MCF 10A (cell line): ENCODE measurements at regions of chr20 and their contacts with region 1.

Region 1: DNA sequence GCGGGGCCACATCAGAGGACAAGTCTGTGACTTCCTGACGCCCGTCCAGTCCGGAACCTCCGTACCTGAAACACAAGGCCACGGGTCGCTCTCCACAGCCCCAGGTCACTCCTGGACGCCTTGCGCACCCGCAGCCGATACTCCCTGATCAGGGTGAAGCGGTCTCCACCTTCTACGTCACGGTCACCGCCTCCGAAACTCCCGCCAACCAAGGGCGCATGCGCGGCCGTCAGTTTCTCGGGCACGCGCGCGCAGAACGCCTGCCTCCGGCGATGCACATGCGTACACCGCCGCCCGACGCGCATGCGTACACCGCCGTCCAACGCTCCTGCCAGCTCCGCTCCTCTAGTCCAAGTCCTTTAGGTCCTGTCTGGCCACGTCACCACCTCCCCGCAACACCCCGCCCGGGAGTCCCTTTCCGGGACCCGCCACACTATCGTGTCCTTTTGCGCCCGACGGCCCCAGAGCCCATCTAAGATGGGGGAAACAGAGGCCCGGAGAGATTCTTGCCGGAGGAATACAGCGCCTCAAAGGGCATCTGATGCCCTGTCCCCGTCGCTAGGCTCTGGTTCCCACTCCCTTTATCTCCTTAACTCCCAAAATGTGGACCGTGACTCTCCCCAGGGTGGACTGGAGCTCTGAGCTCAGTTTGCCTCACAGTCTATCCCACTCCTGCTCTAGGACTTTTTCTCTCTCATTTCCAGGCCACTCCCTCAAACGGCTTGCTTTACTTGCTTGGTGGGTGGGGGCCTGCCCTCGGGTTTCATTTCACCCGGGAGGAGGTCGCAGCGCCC is at the start of gene DSN1:
- DNase-seq: peak; percentile 96
- H3K4me3 Mint-ChIP-seq: peak within 1 kb of the TSS; percentile 79
- H3K27ac Mint-ChIP-seq: peak within 1 kb of the TSS; percentile 90
- H3K4me1 Mint-ChIP-seq: peaks cover 8% of the 10 kb centered on the region
- H3K27me3 Mint-ChIP-seq: no peaks in the 10 kb centered on the region
- CTCF ChIP-seq: no peak
- total RNA-seq, gene DSN1: 7.8 and 8.4 TPM in 2 replicates

Region 2: DNA sequence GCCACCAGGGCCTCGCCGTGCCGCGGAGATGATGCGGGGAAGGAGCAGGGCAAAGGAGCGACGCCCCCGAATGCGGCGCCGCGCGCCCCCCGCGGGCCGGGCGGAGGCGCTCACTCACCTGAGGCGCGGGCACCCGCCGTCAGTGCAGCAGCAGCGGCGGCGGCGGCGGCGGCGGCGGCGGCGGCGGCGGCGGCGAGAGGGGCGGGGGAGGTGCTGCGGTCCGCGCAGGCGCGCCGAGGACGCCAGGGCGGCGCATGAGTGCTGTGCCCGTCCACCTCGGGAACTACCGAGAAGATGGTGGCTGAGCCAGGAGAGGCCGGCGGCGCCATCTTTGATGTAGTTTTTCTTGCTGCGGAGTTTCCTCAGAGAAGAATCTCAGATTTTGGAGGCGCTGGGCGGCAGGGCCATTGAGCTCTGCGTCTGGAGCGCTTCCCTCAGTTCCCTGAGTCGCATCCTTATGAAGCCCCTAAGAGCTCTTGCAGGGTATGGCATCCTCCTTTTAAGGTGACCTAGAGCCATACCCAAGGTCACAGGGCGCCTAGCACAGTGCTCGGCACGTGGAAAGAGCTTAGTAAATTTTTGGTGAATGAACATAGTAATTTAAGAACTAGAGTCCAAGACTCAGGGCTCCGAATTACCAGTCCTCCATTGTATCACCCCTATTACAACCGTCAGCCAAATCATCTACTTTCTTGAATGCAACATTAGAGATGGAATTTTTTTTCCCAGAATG is 27.7 kb before region 1 on chr20 and contains the start of gene NDRG3:
- CTCF ChIA-PET with region 1: interaction called, 5 read pairs
- POLR2A ChIA-PET with region 1: interaction called, 31 read pairs
- intact Hi-C with region 1: no loop called
- DNase-seq: peak; percentile 89
- H3K4me3 Mint-ChIP-seq: peak within 1 kb of the TSS; percentile 86
- H3K27ac Mint-ChIP-seq: peak within 1 kb of the TSS; percentile 63
- H3K4me1 Mint-ChIP-seq: peaks cover 15% of the 10 kb centered on the region
- H3K27me3 Mint-ChIP-seq: no peaks in the 10 kb centered on the region
- CTCF ChIP-seq: no peak
- total RNA-seq, gene NDRG3: 7.5 and 10.3 TPM in 2 replicates

Region 3: GRCh38 chr20:36786246-36786645 is 12.5 kb after region 1 on chr20:
- CTCF ChIA-PET with region 1: interaction called, 10 read pairs
- POLR2A ChIA-PET with region 1: interaction called, 5 read pairs
- intact Hi-C with region 1: no loop called
- DNase-seq: no peak
- H3K4me3 Mint-ChIP-seq: no peak overlapping the region
- H3K27ac Mint-ChIP-seq: no peak overlapping the region
- H3K4me1 Mint-ChIP-seq: no peaks in the 10 kb centered on the region
- H3K27me3 Mint-ChIP-seq: no peaks in the 10 kb centered on the region
- CTCF ChIP-seq: no peak

Region 4: GRCh38 chr20:36835453-36836198 is 61.8 kb after region 1 on chr20:
- CTCF ChIA-PET with region 1: interaction called, 4 read pairs
- POLR2A ChIA-PET with region 1: interaction called, 11 read pairs
- intact Hi-C with region 1: no loop called
- DNase-seq: peak; percentile 94
- H3K4me3 Mint-ChIP-seq: peak overlapping the region; percentile 65
- H3K27ac Mint-ChIP-seq: peak overlapping the region; percentile 81
- H3K4me1 Mint-ChIP-seq: no peaks in the 10 kb centered on the region
- H3K27me3 Mint-ChIP-seq: no peaks in the 10 kb centered on the region
- CTCF ChIP-seq: no peak

Region 5: DNA sequence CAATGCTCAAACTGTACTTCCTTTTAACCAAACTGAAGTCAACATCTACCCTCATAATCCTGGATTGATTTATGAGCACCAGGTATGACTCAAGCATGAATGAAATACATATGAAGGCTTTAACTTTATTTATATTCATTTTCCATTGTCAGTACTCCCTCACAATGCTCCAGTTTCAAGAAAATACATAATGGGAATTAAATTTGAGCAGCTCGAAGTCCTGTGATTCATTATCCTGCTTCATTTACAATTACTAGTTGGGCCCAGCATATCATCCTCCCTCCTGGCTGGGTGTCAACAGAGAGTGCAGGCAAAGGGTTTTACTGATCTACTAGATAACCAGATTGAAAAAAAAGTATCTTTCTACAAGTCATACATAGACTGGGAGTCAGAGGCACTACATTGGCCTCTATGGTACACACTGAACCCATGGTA is 167.6 kb after region 1 on chr20:
- CTCF ChIA-PET with region 1: no interaction called
- POLR2A ChIA-PET with region 1: no interaction called
- intact Hi-C with region 1: no loop called
- DNase-seq: no peak
- H3K4me3 Mint-ChIP-seq: no peak overlapping the region
- H3K27ac Mint-ChIP-seq: no peak overlapping the region
- H3K4me1 Mint-ChIP-seq: no peaks in the 10 kb centered on the region
- H3K27me3 Mint-ChIP-seq: no peaks in the 10 kb centered on the region
- CTCF ChIP-seq: no peak